ENCODE measurements at regions of chr11 and their contacts with region 1.

Region 1: DNA sequence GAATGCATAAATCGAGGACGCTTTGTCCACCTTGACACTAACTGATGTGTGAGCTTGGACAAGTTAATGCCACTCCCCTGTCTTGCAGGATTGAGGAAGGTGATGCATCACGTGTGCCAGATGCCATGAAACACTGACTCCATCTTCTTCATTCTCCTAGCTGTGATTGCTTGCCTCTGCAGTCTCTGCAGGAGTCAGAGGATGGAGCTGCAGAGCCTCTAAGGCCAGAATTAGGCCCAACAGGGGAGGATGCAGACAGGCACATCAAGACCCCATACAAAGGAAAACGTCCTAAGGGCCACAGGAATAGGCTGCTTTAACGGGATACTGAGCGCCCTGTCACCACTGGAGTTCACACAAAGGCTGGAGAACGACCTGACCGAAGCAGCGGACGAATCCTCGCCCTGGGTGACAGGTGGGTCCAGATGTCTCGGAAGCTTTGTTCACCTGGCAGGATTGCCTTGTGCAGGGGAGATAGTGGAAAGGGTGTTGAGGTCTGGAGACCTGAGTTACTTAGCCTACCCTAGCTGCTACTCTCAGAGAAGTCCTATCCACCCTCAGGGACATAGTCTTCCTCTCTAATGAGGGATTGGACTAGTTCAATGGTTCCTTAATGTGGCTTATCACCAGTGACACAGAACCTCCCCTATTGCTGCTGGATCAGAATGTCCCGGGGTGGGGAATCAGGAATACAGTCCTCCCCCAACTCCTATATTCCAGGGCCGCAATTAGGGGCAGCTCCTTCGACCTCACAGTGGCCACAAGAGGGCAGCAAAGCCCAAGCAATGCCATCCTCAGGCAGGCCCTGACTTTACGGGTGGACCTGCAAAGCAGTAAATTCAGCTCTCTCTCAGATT is 32.4 kb downstream of the DBX1 start:
- DNase-seq: no peak
- ATAC-seq: peak; percentile 94
- H3K4me3 ChIP-seq: no peak overlapping the region
- H3K27ac ChIP-seq: no peak overlapping the region
- H3K4me1 ChIP-seq: no peaks in the 10 kb centered on the region
- H3K27me3 ChIP-seq: peaks cover 1 to 7% of the 10 kb centered on the region in 2 experiments; a peak in 3 of 4 replicates
- CTCF ChIP-seq: peak; percentile 84 to 96 (median 87); a peak in 5 of 6 replicates
- EP300 ChIP-seq: no peak
- POLR2A ChIP-seq: no peak
- RAD21 ChIP-seq: peak; percentile 98

Region 2: DNA sequence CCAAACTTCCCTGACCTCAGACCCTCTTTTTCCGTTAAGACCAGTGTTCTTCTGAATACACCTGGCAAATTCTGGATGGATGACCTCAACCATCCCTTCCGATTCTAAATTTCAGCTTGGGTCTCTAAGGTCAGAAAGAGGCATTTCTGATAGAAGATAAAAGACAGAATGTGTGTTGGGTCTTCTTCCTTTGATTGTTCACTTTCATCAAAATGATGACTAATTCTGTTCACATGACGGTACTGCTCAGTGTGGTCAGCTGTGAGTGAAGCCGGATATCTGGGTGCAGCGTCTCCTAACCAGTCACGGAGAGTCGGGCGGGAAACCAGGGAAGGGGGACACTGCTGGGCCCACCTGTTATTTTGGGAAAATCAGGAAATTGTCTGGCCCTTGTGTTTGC is 566.9 kb before region 1 on chr11:
- CTCF ChIA-PET with region 1: interaction called, 9 read pairs
- POLR2A ChIA-PET with region 1: no interaction called
- RAD21 ChIA-PET with region 1: interaction called, 3 read pairs
- SMC1A ChIA-PET with region 1: interaction called, 4 read pairs
- in situ Hi-C with region 1: no loop called
- intact Hi-C with region 1: loop called (anchors 5 kb)
- DNase-seq: no peak
- ATAC-seq: no peak
- H3K4me3 ChIP-seq: no peak overlapping the region
- H3K27ac ChIP-seq: no peak overlapping the region
- H3K4me1 ChIP-seq: no peaks in the 10 kb centered on the region
- H3K27me3 ChIP-seq: no peaks in the 10 kb centered on the region; a peak in 1 of 4 replicates
- CTCF ChIP-seq: no peak
- EP300 ChIP-seq: no peak
- POLR2A ChIP-seq: no peak
- RAD21 ChIP-seq: no peak

Region 3: DNA sequence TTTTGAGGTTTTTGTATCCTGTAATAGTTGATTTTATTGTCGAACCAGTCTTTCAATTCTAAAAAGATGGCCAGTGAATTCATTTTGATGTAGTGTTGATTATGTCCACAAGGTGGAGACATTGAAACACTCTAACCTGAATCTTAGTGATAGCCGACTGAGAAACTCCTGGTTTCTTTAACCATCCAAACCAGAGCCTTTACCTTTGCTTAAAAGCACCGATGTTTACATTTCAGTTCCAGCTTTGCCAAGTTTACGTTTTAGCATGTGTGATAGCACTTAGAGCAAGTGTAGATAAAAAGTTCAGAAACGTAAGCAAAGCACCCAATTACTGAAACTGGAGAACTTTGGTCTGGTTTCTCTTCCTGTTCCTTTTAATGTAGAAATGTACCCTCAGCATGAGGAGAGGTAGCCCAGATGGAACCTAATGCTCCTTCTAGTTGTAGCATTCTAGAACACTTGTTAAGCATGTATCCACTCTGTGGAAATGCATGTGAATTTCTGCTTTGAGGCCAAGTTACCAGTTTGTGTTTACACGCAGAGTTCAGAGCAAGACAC is 176.3 kb before region 1 on chr11:
- CTCF ChIA-PET with region 1: interaction called, 46 read pairs
- POLR2A ChIA-PET with region 1: no interaction called
- RAD21 ChIA-PET with region 1: interaction called, 17 read pairs
- SMC1A ChIA-PET with region 1: interaction called, 8 read pairs
- in situ Hi-C with region 1: no loop called
- intact Hi-C with region 1: loop called (anchors 5 kb)
- DNase-seq: peak; percentile 49
- ATAC-seq: peak; percentile 90
- H3K4me3 ChIP-seq: no peak overlapping the region
- H3K27ac ChIP-seq: no peak overlapping the region
- H3K4me1 ChIP-seq: peaks cover 7% of the 10 kb centered on the region
- H3K27me3 ChIP-seq: no peaks in the 10 kb centered on the region
- CTCF ChIP-seq: peak; percentile 44 to 55 (median 54)
- EP300 ChIP-seq: 0 out of 4 replicates have a peak, but pooled peaks of 1 of the 2 experiments have one; percentile 32
- POLR2A ChIP-seq: no peak
- RAD21 ChIP-seq: peak; percentile 70

Region 4: GRCh38 chr11:20156280-20156875 is 28.5 kb after region 1 on chr11:
- CTCF ChIA-PET with region 1: interaction called, 12 read pairs
- POLR2A ChIA-PET with region 1: no interaction called
- RAD21 ChIA-PET with region 1: interaction called, 5 read pairs
- SMC1A ChIA-PET with region 1: interaction called, 15 read pairs
- in situ Hi-C with region 1: no loop called
- intact Hi-C with region 1: no loop called
- DNase-seq: no peak
- ATAC-seq: peak; percentile 29; the same call in 1 of the 3 replicates
- H3K4me3 ChIP-seq: no peak overlapping the region
- H3K27ac ChIP-seq: no peak overlapping the region
- H3K4me1 ChIP-seq: no peaks in the 10 kb centered on the region; the same call in 1 of the 2 replicates
- H3K27me3 ChIP-seq: peaks cover 6 to 13% of the 10 kb centered on the region in 2 experiments
- CTCF ChIP-seq: no peak
- EP300 ChIP-seq: no peak
- POLR2A ChIP-seq: no peak
- RAD21 ChIP-seq: no peak

Region 5: GRCh38 chr11:20337526-20338154 is 209.7 kb after region 1 on chr11:
- CTCF ChIA-PET with region 1: interaction called, 19 read pairs
- POLR2A ChIA-PET with region 1: no interaction called
- RAD21 ChIA-PET with region 1: interaction called, 10 read pairs
- SMC1A ChIA-PET with region 1: interaction called, 4 read pairs
- in situ Hi-C with region 1: no loop called
- intact Hi-C with region 1: loop called (anchors 1 kb)
- DNase-seq: no peak
- ATAC-seq: peak; percentile 80
- H3K4me3 ChIP-seq: no peak overlapping the region
- H3K27ac ChIP-seq: no peak overlapping the region
- H3K4me1 ChIP-seq: no peaks in the 10 kb centered on the region
- H3K27me3 ChIP-seq: peaks cover 0 to 3% of the 10 kb centered on the region in 2 experiments; a peak in 3 of 4 replicates
- CTCF ChIP-seq: peak; percentile 37 to 68 (median 47); a peak in 5 of 6 replicates
- EP300 ChIP-seq: no peak
- POLR2A ChIP-seq: no peak
- RAD21 ChIP-seq: peak; percentile 61

Region 6: DNA sequence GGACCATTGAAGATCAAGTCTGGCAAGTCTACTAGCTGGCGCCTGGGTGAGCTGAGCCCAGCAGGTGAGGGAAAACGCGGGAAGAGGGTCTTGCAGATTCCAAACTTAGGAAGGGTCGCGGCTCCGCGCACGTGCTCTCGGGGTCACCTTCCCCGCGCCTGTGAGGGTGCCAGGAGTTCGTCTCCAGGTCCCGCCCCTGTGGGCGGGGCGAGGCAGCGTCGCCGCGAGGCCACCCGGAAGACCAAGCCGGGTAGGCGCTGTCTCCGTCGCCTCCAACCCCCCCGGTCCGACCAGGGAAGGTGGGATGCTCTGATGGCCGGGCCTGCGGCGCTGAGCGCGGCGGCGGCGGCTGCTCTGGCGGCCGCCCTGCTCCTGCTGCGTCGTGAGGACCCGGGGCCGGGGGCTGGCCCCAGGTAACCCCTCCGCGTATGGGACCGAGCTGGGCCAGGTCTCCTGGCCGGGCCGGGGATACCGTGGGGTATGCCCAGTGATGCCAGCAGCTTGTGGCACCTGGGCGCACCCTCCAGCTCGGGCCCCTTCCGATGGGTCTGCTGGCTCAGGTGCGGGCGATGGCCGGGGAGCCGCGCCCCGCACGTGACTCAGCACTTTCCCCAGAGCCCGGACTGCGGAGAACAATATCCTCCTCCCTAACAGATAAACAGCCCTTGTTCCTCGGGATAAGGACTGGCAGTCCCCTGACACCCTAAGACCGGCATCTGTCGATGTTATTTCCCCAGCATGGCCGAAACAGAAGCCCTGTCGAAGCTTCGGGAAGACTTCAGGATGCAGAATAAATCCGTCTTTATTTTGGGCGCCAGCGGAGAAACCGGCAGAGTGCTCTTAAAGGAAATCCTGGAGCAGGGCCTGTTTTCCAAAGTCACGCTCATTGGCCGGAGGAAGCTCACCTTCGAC is 235.9 kb after region 1 on chr11 and contains the start of gene HTATIP2:
- CTCF ChIA-PET with region 1: interaction called, 28 read pairs
- POLR2A ChIA-PET with region 1: interaction called, 3 read pairs
- RAD21 ChIA-PET with region 1: interaction called, 9 read pairs
- SMC1A ChIA-PET with region 1: interaction called, 4 read pairs
- in situ Hi-C with region 1: no loop called
- intact Hi-C with region 1: no loop called
- DNase-seq: no peak
- ATAC-seq: peak; percentile 95
- H3K4me3 ChIP-seq: peak within 1 kb of the TSS; percentile 58
- H3K27ac ChIP-seq: peak within 1 kb of the TSS; percentile 65
- H3K4me1 ChIP-seq: peaks cover 7% of the 10 kb centered on the region; the same call in 1 of the 2 replicates
- H3K27me3 ChIP-seq: no peaks in the 10 kb centered on the region
- CTCF ChIP-seq: no peak
- EP300 ChIP-seq: no peak
- POLR2A ChIP-seq: peak; percentile 90
- RAD21 ChIP-seq: no peak
- polyA plus RNA-seq, gene HTATIP2: 51.0 to 58.5 TPM

Region 7: GRCh38 chr11:20609727-20610707 is 482.1 kb after region 1 on chr11:
- CTCF ChIA-PET with region 1: interaction called, 35 read pairs
- POLR2A ChIA-PET with region 1: no interaction called
- RAD21 ChIA-PET with region 1: interaction called, 12 read pairs
- SMC1A ChIA-PET with region 1: interaction called, 4 read pairs
- in situ Hi-C with region 1: loop called (anchors 5 kb)
- intact Hi-C with region 1: loop called (anchors 1 kb)
- DNase-seq: no peak
- ATAC-seq: peak; percentile 99
- H3K4me3 ChIP-seq: peak overlapping the region; percentile 32; the same call in 1 of the 2 replicates
- H3K27ac ChIP-seq: no peak overlapping the region
- H3K4me1 ChIP-seq: peaks cover 4% of the 10 kb centered on the region; the same call in 1 of the 2 replicates
- H3K27me3 ChIP-seq: peaks cover 3 to 16% of the 10 kb centered on the region in 2 experiments
- CTCF ChIP-seq: peak; percentile 96 to 98 (median 97)
- EP300 ChIP-seq: no peak
- POLR2A ChIP-seq: no peak
- RAD21 ChIP-seq: peak; percentile 97